ENCODE measurements at regions of chr7 and their contacts with region 1.

Region 1: DNA sequence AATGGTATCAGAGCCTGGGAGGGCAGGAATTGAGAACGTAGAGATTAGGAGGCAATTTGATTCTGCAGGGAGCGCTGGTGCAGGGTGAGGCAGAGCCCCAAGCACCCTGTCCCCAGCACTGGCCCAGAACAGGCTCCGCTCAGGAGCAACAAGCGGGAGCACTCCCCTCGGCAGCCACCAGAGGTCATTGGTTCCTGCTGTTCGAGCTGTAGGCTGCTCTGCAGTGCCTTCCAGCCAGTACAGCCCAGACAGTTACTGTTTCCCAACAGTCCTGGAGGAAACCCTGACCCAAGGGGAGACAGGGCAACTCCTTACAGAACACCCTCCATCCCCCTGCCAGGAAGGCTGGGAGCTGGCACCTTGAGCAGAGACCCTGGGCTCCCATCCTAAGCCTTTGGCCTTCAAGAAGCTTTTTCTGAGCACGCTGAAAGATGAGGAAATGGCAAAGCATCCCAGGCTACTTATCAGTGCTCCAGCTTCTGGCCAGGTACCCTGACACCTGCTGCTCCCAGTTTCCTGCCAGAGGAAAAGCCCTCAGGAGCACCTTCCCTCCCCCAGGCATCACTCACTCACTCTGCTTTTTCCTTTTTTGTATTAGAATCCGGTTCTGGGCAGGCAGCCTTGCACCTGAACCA is 71.2 kb upstream of the EFCAB10 start:
- DNase-seq: peak; percentile 64 to 90 (median 82)
- ATAC-seq: peak; percentile 85 to 91 (median 88)
- H3K4me3 ChIP-seq: no peak overlapping the region
- H3K27ac ChIP-seq: no peak overlapping the region
- H3K4me1 ChIP-seq: peaks cover 0 to 30% (median 0%) of the 10 kb centered on the region in 3 donors
- H3K27me3 ChIP-seq: no peaks in the 10 kb centered on the region
- CTCF ChIP-seq: peak; percentile 59 to 89 (median 79)

Region 2: GRCh38 chr7:105680505-105681187 is 28.2 kb after region 1 on chr7:
- intact Hi-C with region 1: no loop called
- DNase-seq: peak in 1 of 6 donors; percentile 23
- ATAC-seq: no peak
- H3K4me3 ChIP-seq: no peak overlapping the region
- H3K27ac ChIP-seq: no peak overlapping the region
- H3K4me1 ChIP-seq: peaks cover 14 to 34% (median 25%) of the 10 kb centered on the region in 3 donors
- H3K27me3 ChIP-seq: no peaks in the 10 kb centered on the region
- CTCF ChIP-seq: no peak

Region 3: GRCh38 chr7:105743351-105744090 is 91.0 kb after region 1 on chr7:
- intact Hi-C with region 1: loop called in 1 of 3 experiments (anchors 10 kb)
- DNase-seq: no peak
- ATAC-seq: peak in 1 of 4 donors; percentile 34
- H3K4me3 ChIP-seq: no peak overlapping the region
- H3K27ac ChIP-seq: no peak overlapping the region
- H3K4me1 ChIP-seq: no peaks in the 10 kb centered on the region
- H3K27me3 ChIP-seq: no peaks in the 10 kb centered on the region
- CTCF ChIP-seq: no peak

Region 4: GRCh38 chr7:106009403-106010226 is 357.1 kb after region 1 on chr7:
- intact Hi-C with region 1: loop called in 1 of 3 experiments (anchors 10 kb)
- DNase-seq: peak; percentile 74 to 94 (median 88)
- ATAC-seq: peak; percentile 99 to 100 (median 99)
- H3K4me3 ChIP-seq: no peak overlapping the region
- H3K27ac ChIP-seq: no peak overlapping the region
- H3K4me1 ChIP-seq: peaks cover 0 to 3% (median 0%) of the 10 kb centered on the region in 3 donors
- H3K27me3 ChIP-seq: no peaks in the 10 kb centered on the region
- CTCF ChIP-seq: peak; percentile 94 to 99 (median 96)

Measured in pancreas (tissue), 10 donors.